Activated naive CD4-positive, alpha-beta T cell treated with anti-CD3 and anti-CD28 coated beads for 36 hours (primary cell): ENCODE measurements at regions of chr9 and their contacts with region 1.

Region 1: DNA sequence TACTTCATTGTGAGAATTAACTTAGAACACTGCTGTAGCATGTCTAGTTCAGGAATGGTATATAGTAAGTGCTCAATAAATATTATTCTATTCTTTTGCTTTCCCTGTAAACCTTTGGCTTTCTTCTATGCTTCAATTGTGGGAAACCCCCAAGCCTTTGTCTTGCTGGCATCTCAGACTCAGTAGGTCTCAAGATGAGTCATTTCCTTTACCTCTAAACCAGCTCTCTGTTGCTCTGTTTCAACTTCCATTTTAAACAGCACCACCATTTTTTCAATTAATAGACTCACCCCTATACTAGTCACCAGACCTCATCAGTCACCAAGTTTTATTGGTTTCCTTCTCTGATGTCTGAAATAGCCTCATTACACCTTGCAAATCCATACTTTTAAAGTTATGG is 43.5 kb downstream of the DMAC1 start:
- DNase-seq: peak; percentile 46
- H3K4me3 Mint-ChIP-seq: no peak overlapping the region
- H3K27ac Mint-ChIP-seq: peak overlapping the region; percentile 72
- H3K4me1 Mint-ChIP-seq: peaks cover 24% of the 10 kb centered on the region
- H3K27me3 Mint-ChIP-seq: no peaks in the 10 kb centered on the region

Region 2: DNA sequence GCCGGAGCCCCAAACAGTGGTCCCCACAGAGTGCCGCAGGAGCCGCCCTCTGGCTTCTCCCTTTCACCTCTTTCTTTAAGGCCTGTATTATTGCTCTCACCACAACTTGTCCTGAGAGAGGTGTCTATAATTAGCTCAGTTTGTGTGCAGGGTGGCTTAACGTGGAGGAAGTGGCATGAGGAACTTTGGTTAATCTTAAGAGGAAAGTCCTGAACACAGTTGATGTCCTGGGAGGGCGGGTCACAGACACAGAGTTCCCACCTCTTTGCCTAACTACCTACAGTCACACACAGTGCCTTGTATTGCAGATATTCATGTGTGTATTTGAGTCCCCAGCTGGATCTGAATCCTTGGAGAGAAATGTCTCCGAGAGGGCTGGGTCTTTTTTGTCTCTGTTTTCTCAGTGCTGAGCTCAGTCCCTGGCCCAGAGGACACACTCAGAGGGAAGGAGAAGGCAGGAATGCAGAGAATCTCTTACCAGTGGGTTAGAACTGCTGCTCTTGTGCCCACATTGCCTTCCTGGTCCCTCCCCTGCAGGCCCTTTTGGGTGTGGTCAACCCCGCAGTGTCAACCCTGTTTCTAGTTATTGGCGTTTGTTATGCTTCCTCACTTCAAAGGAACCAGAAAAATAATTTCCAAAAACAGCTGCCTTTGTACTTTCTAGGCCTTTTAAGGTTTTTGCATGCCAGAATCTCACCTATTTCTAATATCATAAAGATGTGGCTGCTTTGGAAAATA is 605.8 kb before region 1 on chr9:
- CTCF ChIA-PET with region 1: no interaction called
- intact Hi-C with region 1: no loop called
- DNase-seq: peak; percentile 8
- H3K4me3 Mint-ChIP-seq: no peak overlapping the region
- H3K27ac Mint-ChIP-seq: no peak overlapping the region
- H3K4me1 Mint-ChIP-seq: peaks cover 39% of the 10 kb centered on the region
- H3K27me3 Mint-ChIP-seq: no peaks in the 10 kb centered on the region

Region 3: GRCh38 chr9:7622481-7622880 is 133.6 kb before region 1 on chr9:
- CTCF ChIA-PET with region 1: no interaction called
- intact Hi-C with region 1: loop called (anchors 5 kb)
- DNase-seq: no peak
- H3K4me3 Mint-ChIP-seq: no peak overlapping the region
- H3K27ac Mint-ChIP-seq: no peak overlapping the region
- H3K4me1 Mint-ChIP-seq: peaks cover 19% of the 10 kb centered on the region
- H3K27me3 Mint-ChIP-seq: no peaks in the 10 kb centered on the region

Region 4: GRCh38 chr9:7739595-7739994 is 16.5 kb before region 1 on chr9:
- CTCF ChIA-PET with region 1: no interaction called
- intact Hi-C with region 1: no loop called
- DNase-seq: no peak
- H3K4me3 Mint-ChIP-seq: no peak overlapping the region
- H3K27ac Mint-ChIP-seq: no peak overlapping the region
- H3K4me1 Mint-ChIP-seq: no peaks in the 10 kb centered on the region
- H3K27me3 Mint-ChIP-seq: no peaks in the 10 kb centered on the region

Region 5: DNA sequence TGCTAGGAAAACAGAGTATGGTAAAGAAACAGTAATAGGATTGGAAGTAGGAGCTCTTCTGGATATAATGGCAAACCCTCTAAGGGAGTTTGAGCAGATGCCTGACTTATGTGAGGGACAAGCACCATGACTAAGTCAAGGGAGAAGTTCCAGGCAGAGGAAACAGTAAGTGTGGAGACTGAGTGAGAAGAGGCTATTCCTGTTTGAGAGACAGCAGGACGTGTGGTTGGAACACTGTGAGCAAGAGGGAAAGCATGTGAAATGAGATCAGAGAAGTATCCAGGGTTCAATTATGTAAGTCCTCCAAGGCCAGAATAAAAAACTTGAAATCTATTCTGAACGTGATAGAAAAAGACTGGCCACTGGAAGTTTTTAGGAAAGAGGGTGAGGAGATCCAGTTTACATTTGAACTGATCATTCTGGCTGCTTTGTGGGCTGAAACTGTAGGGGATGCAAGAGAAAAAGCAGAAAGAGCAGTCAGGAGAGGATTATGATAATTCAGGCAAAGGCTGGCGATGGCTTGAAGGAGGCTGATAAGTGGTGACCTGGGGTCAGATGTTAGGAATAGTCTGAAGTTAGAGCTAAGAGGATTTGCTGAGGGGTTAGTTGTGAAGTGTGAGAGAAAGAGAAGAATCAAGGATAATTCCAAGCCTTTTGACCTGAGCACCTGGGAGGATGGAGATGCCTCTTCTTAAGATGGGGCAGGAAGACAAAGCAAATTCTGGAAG is 24.3 kb after region 1 on chr9:
- CTCF ChIA-PET with region 1: no interaction called
- intact Hi-C with region 1: no loop called
- DNase-seq: no peak
- H3K4me3 Mint-ChIP-seq: no peak overlapping the region
- H3K27ac Mint-ChIP-seq: no peak overlapping the region
- H3K4me1 Mint-ChIP-seq: no peaks in the 10 kb centered on the region
- H3K27me3 Mint-ChIP-seq: no peaks in the 10 kb centered on the region

Region 6: DNA sequence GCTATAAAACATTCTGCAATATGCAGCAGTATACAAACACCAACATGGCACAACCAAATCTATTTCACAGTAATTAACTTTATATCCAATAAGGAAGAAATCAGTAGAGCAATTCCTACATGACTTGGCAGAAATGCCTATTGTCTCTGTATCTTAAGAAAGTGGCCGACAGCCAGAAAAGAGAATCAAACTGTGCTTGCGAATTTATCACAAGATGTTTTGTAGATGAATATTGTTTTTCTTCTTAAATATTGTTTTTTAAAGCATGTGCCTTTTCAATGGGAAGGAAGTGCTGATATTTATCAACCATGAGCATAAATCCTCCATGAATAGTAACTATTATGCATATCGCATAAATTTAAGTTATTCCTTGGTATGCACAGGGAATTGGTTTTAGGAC is 545.2 kb after region 1 on chr9:
- CTCF ChIA-PET with region 1: no interaction called
- intact Hi-C with region 1: no loop called
- DNase-seq: no peak
- H3K4me3 Mint-ChIP-seq: no peak overlapping the region
- H3K27ac Mint-ChIP-seq: no peak overlapping the region
- H3K4me1 Mint-ChIP-seq: no peaks in the 10 kb centered on the region
- H3K27me3 Mint-ChIP-seq: peaks cover 5% of the 10 kb centered on the region